Posterior cingulate gyrus (tissue), 11 donors: ENCODE measurements at regions of chr16 and their contacts with region 1.

Region 1: DNA sequence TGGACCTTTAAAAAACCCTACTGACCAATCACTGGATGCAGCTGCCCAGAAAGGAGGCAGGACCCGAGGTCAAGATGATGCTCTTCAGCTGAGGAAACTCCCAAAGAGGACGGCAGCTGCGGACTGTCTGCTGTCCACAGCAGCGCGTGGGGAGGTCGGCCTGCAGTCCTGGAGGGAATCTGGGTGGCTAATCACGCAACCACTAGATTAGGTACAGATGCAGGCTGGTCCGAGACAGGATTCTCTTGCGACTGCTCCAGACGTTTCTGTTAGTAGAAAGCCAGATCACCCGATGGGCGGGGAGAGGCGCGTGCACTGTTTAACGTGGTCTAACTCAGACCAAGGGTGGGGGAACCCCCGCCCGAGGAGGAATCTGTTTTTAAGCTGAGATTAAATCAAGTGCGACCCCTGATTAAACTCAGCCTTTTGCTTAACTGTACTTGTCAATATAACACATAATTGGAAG is 8.8 kb downstream of the CTRB2 start:
- DNase-seq: peak in 2 of 10 donors; percentile 39 to 59

Region 2: DNA sequence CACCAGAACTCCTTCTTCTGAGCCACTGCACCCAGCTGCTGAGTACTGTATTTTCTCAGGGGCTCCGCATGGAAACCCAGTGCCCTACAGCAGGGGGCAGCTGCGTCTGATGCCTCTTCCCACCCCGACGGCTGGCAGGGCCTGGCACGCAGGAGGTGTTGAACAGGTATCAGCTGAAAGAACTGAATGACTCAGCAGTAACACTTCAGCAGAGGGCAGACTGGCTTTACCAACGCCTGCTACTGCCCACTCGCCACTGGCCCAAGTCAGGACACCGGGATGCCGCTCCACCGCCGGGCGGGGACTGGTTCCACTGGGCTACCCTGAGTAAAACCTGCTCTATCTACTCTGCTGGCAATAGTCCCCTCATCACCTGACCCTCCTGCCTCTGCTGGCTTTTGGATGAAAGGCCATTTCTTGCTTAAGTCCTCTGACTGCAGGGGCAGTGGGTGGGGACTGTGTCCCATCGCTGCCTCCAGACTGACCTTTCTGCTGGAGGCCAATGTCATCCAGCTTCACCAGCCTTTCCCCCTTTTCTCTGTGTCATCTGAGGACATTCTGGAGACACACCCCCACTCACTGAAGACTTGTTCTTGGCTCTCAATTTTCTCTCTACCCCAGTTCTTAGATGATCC is 323.1 kb before region 1 on chr16:
- intact Hi-C with region 1: no loop called
- DNase-seq: no peak

Region 3: DNA sequence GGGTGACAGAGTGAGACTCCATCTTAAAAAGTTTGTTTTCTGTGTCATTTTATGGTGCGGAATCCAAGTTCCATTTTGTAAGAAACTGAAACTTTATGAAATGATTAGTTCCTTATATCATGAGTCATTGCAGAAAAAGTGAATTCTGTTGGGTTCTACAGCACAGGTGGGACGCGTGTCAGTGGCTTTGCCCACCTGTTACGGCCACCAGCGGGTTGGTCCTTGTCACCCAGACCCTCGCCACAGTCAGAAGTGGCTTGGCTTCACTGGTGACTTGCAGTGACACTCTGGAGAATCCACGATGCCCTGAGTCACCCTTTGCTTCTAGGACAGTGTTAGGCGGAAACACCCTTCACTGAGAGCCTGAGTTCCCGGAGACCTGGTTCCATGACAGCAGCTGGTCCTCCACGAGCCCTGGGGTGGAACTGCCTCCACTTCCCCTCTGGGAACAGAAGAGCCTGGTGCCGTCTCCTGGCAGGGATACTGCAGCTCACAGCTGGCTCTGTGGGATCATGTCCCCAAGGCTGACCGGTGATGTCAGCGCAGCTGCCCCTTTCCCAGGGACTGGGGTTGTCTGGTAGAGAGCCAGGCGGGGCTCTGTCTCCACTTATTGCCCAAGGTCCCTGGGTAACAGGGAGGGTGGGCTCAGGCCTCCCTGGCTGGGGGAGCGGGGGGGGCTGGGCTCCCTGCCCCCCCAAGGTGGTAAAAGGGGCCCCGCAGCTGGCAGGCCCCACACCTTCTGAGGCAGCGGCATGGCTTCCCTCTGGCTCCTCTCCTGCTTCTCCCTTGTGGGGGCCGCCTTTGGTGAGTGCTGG is 20.3 kb after region 1 on chr16 and contains the start of gene CTRB1:
- intact Hi-C with region 1: no loop called
- DNase-seq: peak in 7 of 10 donors; percentile 31 to 93 (median 60)

Region 4: DNA sequence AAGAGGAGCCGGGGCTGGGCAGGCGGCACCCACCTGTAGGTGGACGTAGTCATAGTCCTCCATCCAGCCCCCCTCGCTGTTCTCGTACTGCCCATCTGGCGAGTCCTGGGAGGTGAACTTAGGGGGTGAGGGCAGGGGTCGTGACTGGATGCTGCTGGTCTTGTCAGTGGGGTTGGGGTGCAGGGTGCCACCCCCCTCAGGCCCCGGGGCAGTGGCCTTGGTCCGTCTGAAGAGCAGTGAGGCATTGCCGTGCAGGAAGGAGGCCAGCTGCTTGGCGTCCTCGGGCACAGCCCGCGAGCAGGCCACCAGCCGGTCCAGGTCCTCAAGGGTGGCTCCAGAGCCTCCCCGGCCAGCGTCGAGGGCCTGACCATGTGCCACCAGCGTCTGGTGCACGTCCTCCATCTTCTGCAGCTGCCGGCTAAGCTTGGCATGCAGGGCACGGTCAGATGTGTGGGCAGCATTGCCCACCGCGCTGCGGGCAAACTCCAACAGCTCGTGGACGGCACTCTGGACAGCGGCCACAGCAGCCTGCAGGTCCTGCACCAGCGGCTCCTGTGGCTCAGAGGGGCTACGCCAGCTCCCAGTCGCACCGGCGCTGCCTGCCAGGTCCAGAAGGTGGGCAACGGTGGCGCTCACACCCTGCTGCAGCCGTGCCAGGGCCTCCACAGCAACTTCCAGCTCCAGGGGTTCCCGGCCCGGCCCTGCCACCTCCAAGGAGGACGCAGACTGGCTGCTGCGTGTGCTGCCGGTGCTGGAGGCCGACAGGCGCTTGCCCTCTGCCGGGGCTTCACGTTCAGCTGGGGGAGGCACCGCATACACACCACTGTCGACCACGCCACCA is 36.9 kb after region 1 on chr16:
- intact Hi-C with region 1: loop called (anchors 5 kb)
- DNase-seq: peak in 1 of 10 donors; percentile 87

Region 5: GRCh38 chr16:75402821-75403475 is 204.8 kb after region 1 on chr16:
- intact Hi-C with region 1: loop called (anchors 1 kb)
- DNase-seq: no peak

Region 6: DNA sequence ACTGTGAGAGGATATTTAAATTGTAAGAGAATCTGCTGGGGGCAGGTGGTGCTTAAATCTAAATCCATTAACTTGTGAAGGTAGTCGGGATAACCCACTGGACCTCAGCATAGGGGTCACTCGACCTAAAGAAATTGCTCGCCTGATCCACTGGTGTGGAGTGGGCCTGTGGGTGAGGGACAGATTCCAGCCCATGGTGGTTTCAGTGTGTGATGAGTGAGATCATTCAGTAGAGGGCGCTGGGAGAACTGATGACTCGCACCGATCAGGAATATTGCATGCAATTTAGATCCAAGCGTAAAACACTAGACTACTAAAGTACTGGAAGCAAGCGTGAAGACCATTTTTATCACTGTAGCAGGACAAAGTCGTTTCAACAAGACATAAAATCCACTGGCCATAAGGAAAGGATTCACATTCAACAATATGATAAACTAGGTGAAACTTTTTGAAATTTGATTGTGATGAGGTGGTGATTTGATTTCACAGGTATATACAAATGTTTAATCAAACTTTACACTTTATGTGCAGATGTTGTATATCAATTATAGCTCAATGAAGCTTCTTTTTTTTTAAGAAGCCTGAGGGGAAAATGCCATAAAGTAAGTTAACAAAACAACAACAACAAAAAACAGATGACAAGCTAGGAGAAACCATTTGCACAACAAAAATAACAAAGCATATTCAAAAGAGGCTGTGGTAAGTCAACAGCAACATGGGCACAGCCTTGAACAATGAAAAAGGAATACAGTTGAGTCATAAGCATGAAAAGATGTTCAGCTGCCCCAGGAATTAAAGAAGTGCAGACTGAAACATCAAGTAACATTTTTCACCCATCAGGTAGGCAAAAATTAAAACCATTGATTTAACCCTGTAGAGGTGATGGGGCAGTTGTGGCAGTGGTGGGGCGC is 273.8 kb after region 1 on chr16:
- intact Hi-C with region 1: no loop called
- DNase-seq: peak in 7 of 10 donors; percentile 50 to 89 (median 64)